Calu3 (cell line): ENCODE measurements at regions of chr20 and their contacts with region 1.

Region 1: DNA sequence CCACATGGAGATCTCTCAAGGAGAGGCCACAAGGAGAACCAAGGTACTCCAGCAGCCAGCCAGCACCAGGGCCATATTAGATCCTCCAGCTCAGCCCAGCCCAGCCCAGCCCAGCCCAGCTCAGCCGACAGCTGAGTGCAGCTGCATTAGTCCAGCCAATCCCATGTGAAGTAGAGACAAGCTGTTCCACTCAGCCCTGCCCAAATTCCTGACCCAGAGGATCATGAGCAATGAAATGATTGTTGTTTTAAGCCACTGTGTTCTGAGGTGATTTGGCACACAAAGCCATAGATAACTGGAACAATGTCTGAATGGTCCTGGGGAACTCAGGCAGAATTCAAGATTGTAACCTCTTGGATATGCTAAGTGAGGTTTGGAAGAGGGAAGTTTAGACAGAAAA is 59.5 kb upstream of the BMP2 start:
- DNase-seq: peak; percentile 40
- H3K4me3 Mint-ChIP-seq: no peak overlapping the region
- H3K27ac Mint-ChIP-seq: peak overlapping the region; percentile 80
- H3K4me1 Mint-ChIP-seq: peaks cover 78% of the 10 kb centered on the region
- H3K27me3 Mint-ChIP-seq: no peaks in the 10 kb centered on the region
- CTCF ChIP-seq: no peak

Region 2: DNA sequence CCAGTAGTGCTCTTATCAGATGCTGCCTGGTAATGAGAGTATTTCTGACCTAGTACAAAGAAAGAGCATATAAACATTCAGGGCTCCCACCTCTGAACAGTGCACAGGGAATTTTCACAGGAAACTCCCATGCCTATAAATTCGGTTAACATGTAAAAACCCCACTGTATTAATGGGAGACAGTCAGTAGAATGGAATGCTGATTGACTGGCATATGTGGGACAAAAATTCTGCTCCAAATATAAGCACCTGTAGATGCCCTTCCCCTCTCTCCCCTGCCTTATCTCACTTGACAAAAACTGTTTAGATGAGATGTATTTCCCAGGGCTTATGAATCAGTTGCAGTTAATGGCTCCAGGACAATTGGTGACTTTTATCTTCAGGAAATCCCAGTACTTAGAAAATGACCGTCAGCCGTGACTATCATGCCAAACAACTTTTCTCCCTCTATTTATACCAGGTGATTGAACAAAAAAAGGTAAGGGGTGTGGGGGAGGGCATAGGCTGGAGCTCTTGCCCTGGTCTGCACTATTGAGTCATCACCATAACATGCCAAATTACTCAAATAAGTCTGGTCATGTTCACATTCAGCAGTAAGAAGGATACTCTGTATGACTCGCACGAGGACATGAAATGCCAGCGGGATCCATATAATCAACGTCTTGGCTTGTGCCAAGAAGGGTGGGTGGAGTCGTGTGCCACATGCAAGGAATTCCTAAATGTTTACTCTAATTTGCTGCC is 116.9 kb before region 1 on chr20:
- CTCF ChIA-PET with region 1: no interaction called
- intact Hi-C with region 1: loop called (anchors 2 kb)
- DNase-seq: peak; percentile 49
- H3K4me3 Mint-ChIP-seq: no peak overlapping the region
- H3K27ac Mint-ChIP-seq: peak overlapping the region; percentile 82
- H3K4me1 Mint-ChIP-seq: peaks cover 57% of the 10 kb centered on the region
- H3K27me3 Mint-ChIP-seq: no peaks in the 10 kb centered on the region
- CTCF ChIP-seq: no peak

Region 3: GRCh38 chr20:6663104-6663503 is 44.9 kb before region 1 on chr20:
- CTCF ChIA-PET with region 1: interaction called, 4 read pairs
- intact Hi-C with region 1: loop called (anchors 5 kb)
- DNase-seq: no peak
- H3K4me3 Mint-ChIP-seq: no peak overlapping the region
- H3K27ac Mint-ChIP-seq: no peak overlapping the region
- H3K4me1 Mint-ChIP-seq: peaks cover 36% of the 10 kb centered on the region
- H3K27me3 Mint-ChIP-seq: no peaks in the 10 kb centered on the region
- CTCF ChIP-seq: no peak

Region 4: DNA sequence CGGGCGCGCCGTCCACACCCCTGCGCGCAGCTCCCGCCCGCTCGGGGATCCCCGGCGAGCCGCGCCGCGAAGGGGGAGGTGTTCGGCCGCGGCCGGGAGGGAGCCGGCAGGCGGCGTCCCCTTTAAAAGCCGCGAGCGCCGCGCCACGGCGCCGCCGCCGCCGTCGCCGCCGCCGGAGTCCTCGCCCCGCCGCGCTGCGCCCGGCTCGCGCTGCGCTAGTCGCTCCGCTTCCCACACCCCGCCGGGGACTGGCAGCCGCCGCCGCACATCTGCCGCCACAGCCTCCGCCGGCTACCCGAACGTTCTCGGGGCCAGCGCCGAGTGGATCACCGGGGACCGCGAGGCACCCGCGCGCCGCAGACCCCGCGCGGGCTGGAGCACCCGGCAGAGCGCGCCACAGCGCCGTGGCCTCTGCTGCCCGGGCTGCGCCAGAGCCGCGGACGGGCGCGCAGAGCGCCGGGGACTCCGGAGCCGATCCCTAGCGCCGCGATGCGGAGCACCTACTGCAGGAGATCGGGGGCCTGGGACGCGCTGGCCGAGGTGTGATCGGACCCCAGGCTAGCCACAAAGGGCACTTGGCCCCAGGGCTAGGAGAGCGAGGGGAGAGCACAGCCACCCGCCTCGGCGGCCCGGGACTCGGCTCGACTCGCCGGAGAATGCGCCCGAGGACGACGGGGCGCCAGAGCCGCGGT is 59.7 kb after region 1 on chr20 and contains the start of gene BMP2:
- CTCF ChIA-PET with region 1: no interaction called
- intact Hi-C with region 1: loop called (anchors 5 kb)
- DNase-seq: peak; percentile 42
- H3K4me3 Mint-ChIP-seq: peak within 1 kb of the TSS; percentile 76
- H3K27ac Mint-ChIP-seq: no peak within 1 kb of the TSS
- H3K4me1 Mint-ChIP-seq: peaks cover 8% of the 10 kb centered on the region
- H3K27me3 Mint-ChIP-seq: no peaks in the 10 kb centered on the region
- CTCF ChIP-seq: no peak
- total RNA-seq, gene BMP2: 4.5 and 5.6 TPM in 2 replicates

Region 5: GRCh38 chr20:6908673-6909072 is 200.7 kb after region 1 on chr20:
- CTCF ChIA-PET with region 1: no interaction called
- intact Hi-C with region 1: no loop called
- DNase-seq: no peak
- H3K4me3 Mint-ChIP-seq: no peak overlapping the region
- H3K27ac Mint-ChIP-seq: no peak overlapping the region
- H3K4me1 Mint-ChIP-seq: no peaks in the 10 kb centered on the region
- H3K27me3 Mint-ChIP-seq: no peaks in the 10 kb centered on the region
- CTCF ChIP-seq: no peak